ENCODE measurements at regions of chr3 and their contacts with region 1.

Region 1: DNA sequence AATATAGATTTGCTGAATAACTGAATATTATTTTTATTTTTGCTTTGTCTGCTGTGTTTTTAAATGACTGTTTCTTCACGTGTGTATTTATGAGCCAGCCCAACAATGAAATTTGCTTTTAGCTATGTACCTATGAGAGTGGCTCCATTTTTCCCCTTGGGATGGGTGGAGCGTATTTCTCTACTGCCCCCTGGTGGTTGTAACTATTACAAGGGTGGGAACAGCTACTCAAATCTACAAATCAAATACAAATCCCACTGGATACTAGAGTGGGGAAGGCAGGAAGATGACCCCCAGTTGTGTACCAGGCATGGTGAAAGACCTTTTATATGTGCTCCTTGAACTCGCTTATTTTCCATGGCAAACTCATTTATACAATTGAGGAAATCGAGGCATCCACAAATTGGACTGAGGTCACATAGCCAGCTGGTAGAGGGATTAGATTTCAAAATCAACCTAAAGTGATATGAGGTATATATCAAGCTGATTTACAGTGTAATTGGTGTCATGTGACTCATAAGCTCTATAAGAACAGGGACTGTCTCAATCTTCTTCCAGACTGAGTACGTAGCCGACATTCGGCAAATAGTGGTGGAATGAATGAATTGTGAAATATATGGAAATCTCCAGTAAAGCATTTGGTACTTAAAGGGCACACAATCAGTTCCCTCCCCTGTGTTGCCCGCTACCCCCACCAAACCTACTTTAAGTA is 69.5 kb upstream of the VEPH1 start:
- DNase-seq: no peak
- H3K4me3 Mint-ChIP-seq: no peak overlapping the region
- H3K27ac Mint-ChIP-seq: no peak overlapping the region
- H3K4me1 Mint-ChIP-seq: no peaks in the 10 kb centered on the region
- H3K27me3 Mint-ChIP-seq: peaks cover 9% of the 10 kb centered on the region

Region 2: GRCh38 chr3:157532529-157533297 is 40.0 kb before region 1 on chr3:
- CTCF ChIA-PET with region 1: interaction called, 93 read pairs
- POLR2A ChIA-PET with region 1: no interaction called
- DNase-seq: no peak
- H3K4me3 Mint-ChIP-seq: no peak overlapping the region
- H3K27ac Mint-ChIP-seq: no peak overlapping the region
- H3K4me1 Mint-ChIP-seq: no peaks in the 10 kb centered on the region
- H3K27me3 Mint-ChIP-seq: no peaks in the 10 kb centered on the region

Region 3: DNA sequence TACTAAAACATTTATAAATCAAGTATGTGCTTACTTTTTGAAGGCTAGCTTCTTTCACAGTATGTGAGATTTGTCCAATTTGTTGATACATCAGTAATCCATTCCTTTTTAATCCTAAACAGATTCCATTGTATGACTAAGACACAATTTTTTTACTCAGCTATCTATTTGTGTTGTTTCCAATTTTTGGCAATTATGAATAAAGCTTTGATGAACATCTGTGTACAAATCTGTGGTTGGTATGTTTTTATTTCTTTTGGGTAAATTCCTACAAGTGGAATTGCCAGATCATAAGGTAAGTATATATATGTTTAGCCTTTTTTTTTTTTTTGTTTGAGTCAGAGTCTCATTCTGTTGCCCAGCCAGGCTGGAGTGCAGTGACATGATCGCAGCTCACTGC is 13.3 kb before region 1 on chr3:
- CTCF ChIA-PET with region 1: interaction called, 10 read pairs
- POLR2A ChIA-PET with region 1: no interaction called
- DNase-seq: no peak
- H3K4me3 Mint-ChIP-seq: no peak overlapping the region
- H3K27ac Mint-ChIP-seq: no peak overlapping the region
- H3K4me1 Mint-ChIP-seq: no peaks in the 10 kb centered on the region
- H3K27me3 Mint-ChIP-seq: peaks cover 2% of the 10 kb centered on the region

Measured in activated CD4-positive, alpha-beta memory T cell treated with anti-CD3 and anti-CD28 coated beads, Interleukin-2, amount 10 ng/mL, durations not matched to agents 7 days and 5 days (primary cell).